OCI-LY7 (cell line): ENCODE measurements at regions of chr1 and their contacts with region 1.

Region 1: DNA sequence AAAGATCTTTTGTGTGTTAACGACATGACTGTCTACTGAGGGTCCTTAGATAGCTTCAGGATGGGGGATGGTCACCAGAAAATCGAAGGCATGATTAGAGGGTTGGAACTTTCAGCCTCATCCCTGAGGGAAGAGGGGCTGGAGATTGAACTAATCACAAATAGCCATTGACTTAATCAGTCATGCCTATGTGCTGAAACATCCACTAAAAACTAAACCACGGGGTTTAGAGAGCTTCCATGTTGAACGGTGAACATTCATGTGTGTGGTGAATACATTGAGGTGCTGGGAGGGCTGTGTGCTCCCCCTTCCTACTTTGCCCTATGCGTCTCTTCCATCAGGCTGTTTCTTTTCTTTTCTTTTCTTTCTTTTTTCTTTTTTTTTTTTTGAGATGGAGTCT is 17.0 kb downstream of the RBP7 start:
- DNase-seq: no peak
- H3K4me3 ChIP-seq: no peak overlapping the region
- H3K27ac ChIP-seq: no peak overlapping the region
- H3K4me1 ChIP-seq: no peaks in the 10 kb centered on the region
- CTCF ChIP-seq: no peak

Region 2: DNA sequence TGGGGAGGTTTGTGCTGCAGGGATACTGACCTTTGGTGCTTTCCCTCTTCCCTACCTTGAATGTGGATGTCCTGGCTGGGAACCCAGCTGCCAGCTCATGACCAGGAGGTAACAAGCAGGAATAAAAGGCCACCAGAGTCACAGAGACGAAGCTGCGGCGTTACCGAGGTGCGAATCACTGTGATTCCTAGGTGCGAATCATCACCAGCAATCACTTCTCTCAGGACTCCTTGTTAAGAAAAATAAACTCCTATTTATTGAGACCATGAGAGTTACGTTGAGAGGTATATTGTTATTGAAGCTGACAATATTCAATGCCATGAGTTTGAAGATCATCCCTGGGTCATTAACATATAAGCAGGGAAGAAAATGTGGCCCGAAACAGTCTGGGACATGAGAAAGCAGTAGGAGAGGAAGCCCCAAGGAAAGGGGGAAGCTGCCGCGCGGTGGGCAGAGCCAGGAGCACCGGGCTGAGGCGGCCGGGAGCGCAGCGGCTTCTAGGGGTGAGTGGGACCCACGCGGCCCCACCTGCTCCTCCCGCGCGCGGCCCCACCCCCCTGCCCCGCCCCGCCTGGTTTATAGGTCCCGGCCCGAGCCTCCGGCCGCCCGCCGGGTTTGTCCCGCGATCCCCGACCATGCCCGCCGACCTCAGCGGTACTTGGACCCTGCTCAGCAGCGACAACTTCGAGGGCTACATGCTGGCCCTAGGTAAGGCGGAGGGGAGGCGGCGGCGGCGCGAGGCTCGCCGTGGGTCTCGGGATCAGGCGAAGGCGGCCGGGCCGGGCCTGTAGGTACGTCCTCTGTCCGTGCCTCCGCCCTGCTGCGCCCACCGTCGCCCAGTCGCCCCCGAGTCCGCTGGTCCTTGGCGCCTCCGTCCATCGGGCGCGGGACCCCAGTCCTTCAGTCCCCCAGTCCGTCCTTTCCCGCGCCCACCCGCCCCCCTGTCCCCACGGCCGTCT is 17.1 kb before region 1 on chr1 and contains the start of gene RBP7:
- CTCF ChIA-PET with region 1: no interaction called
- POLR2A ChIA-PET with region 1: interaction called, 10 read pairs
- intact Hi-C with region 1: no loop called
- DNase-seq: no peak
- H3K4me3 ChIP-seq: no peak within 1 kb of the TSS
- H3K27ac ChIP-seq: no peak within 1 kb of the TSS
- H3K4me1 ChIP-seq: no peaks in the 10 kb centered on the region
- CTCF ChIP-seq: no peak
- total RNA-seq, gene RBP7: not detected in 2 replicates